ENCODE measurements at regions of chr17 and their contacts with region 1.

Region 1: DNA sequence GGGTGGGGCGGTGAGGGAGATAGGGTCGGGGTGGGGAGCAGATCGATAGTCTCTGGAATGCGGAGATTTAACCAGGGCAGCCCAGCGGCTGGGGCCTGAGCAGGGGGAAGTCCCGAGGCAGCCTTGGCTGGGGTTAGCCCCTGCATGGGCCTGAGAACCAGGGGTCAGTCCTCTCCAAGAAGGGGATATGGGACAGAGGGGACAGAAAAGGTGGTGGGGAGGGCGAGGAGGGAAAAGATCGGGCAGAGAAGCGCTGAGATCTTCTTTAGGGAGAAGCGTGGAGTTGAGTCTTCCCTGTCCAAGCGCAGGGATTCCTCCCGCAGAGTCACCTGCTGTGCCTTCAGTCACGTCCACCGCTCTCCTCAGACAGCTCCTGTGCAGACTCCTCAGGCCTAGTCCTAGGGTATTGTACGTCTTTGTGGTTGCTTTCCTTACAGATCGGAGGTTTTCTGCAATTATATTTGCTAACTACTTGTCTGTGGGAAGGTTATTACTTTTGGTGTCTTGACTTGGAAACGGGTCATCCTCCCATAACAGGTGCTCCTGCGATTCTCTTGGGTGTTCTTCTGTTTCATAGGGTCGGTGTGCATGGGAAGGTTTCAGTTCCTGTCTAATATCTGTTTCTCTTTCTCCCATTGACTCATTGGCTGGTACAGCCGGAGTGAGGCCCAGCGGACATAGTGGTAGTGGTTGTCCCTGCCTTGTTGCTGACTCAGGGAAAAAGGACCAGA is 952 bp downstream of the CD300A start:
- DNase-seq: no peak
- H3K4me3 Mint-ChIP-seq: no peak overlapping the region
- H3K27ac Mint-ChIP-seq: peak overlapping the region; percentile 82
- H3K4me1 Mint-ChIP-seq: peaks cover 52% of the 10 kb centered on the region
- H3K27me3 Mint-ChIP-seq: no peaks in the 10 kb centered on the region

Region 2: DNA sequence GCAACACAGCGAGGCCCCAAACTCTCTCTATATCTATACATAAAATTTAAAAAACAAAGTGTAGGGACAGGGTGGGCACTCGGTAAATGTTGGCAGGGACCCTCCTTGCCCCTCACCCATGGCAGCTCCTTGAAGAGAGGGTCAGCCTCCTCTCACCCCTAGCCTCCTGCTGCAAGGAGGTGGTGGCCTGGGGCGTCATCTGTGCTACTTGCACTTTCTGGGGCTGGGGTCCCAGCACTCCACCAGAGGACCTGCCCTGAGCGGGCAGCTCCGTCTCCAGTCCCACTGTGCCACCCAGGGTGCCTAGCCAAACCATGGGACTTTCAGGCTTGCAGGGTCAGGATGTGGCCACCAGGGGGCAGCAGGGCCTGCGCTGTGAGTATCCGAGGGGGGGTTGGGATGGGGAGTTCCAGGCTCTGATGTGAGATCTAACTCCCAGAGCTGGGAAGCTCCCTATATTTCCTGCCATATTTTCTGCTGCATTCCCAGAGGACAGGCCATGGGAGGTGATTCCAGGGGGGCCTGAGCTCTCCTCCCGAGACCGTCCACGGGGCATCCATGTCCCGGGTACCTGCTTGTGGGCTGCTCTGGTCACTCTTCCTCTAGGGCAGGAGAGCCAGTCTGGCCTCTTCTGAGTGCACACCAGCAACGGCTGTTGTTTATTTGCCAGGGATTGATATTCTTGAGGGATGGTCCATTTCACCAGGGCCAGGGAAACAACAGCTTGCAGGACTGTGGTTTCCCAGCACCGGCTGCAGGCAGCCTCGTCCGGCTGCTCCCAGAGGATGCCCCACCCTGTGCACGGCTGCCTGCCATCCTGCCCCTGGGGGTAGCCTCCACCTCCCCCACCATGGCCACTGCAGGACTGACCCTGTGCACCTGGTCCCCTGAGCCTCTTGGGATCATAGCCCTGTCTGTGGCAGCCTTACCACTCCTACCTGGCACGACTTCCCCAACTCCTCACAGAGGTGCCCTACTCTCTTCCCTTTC is 99.0 kb before region 1 on chr17:
- intact Hi-C with region 1: no loop called
- DNase-seq: peak; percentile 51
- H3K4me3 Mint-ChIP-seq: no peak overlapping the region
- H3K27ac Mint-ChIP-seq: no peak overlapping the region
- H3K4me1 Mint-ChIP-seq: peaks cover 18% of the 10 kb centered on the region
- H3K27me3 Mint-ChIP-seq: peaks cover 9% of the 10 kb centered on the region

Region 3: DNA sequence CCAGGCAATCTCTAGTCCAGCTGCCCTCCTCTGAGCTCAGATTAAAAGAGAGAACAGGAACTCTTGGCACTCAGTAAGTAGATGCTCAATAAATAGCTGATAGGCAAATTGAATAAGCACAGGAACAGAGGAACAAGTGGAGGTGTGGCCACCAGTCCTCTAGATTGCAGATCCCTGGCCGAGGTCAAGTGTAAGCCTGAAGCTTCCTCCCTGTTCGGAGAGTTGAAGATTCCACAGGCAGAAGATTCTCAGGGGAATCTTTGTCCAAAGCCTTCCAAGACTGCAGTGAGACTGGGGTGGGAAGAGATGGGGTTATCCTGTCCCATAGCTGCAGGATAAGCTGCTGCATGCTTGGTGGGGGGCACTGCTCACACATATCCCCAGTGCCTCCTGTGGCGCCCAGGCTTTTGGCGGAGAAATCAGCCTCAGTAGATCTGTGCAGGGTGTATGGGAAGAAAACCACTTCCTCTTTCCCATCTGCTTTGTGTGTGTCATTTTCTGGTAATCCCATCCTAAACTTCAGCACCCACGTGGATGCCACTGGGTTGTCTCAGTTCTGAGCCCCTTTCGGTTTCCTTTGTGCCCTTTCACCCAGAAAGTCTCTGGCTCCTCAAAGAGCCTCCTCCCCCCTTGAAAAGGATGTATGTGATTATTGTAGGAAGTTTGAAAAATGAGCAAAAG is 11.2 kb after region 1 on chr17:
- intact Hi-C with region 1: loop called (anchors 1 kb)
- DNase-seq: peak; percentile 57
- H3K4me3 Mint-ChIP-seq: peak overlapping the region; percentile 67
- H3K27ac Mint-ChIP-seq: peak overlapping the region; percentile 83
- H3K4me1 Mint-ChIP-seq: peaks cover 63% of the 10 kb centered on the region
- H3K27me3 Mint-ChIP-seq: no peaks in the 10 kb centered on the region